Mammary epithelial cell (primary cell): ENCODE measurements at regions of chr14 and their contacts with region 1.

Region 1: GRCh38 chr14:51395361-51395849 is 155.4 kb downstream of the TMX1 start:
- DNase-seq: peak; percentile 95
- H3K4me3 ChIP-seq: peak overlapping the region in 1 of 3 experiments; percentile 12
- H3K27ac ChIP-seq: peak overlapping the region; percentile 99
- H3K4me1 ChIP-seq: peaks cover 60% of the 10 kb centered on the region
- H3K27me3 ChIP-seq: no peaks in the 10 kb centered on the region
- CTCF ChIP-seq: peak in 1 of 2 donors; percentile 21

Region 2: GRCh38 chr14:51298895-51299294 is 96.5 kb before region 1 on chr14:
- CTCF ChIA-PET with region 1: no interaction called
- dilution Hi-C with region 1: no loop called
- in situ Hi-C with region 1: no loop called
- intact Hi-C with region 1: loop called (anchors 5 kb)
- DNase-seq: no peak
- H3K4me3 ChIP-seq: no peak overlapping the region
- H3K27ac ChIP-seq: no peak overlapping the region
- H3K4me1 ChIP-seq: peaks cover 20% of the 10 kb centered on the region
- H3K27me3 ChIP-seq: no peaks in the 10 kb centered on the region
- CTCF ChIP-seq: no peak

Region 3: DNA sequence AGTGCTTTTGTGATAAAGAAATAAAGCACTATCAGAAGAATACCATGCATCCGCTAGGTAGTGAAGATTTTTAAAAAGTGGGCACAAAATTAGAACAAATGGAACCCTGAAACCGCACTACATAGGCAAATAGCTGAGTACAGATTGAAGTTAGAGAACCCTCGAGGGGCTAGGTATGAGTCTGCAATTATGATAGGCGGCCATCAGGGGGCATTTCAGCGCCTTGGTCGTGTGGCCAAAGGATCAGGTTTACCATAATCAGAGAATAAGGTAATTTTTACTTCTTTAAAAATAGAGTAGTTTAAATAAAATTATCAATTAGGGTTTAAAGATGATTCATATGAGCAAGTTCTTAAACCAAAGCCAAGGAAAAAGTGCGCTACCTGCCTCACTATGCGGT is 25.6 kb before region 1 on chr14:
- CTCF ChIA-PET with region 1: no interaction called
- dilution Hi-C with region 1: no loop called
- in situ Hi-C with region 1: no loop called
- intact Hi-C with region 1: loop called (anchors 1 kb)
- DNase-seq: no peak
- H3K4me3 ChIP-seq: no peak overlapping the region
- H3K27ac ChIP-seq: no peak overlapping the region
- H3K4me1 ChIP-seq: peaks cover 41% of the 10 kb centered on the region
- H3K27me3 ChIP-seq: no peaks in the 10 kb centered on the region
- CTCF ChIP-seq: peak; percentile 24 to 47

Region 4: GRCh38 chr14:51472881-51473280 is 77.5 kb after region 1 on chr14:
- CTCF ChIA-PET with region 1: interaction called, 12 read pairs
- dilution Hi-C with region 1: no loop called
- in situ Hi-C with region 1: no loop called
- intact Hi-C with region 1: no loop called
- DNase-seq: no peak
- H3K4me3 ChIP-seq: no peak overlapping the region
- H3K27ac ChIP-seq: peak overlapping the region; percentile 52
- H3K4me1 ChIP-seq: peaks cover 30% of the 10 kb centered on the region
- H3K27me3 ChIP-seq: no peaks in the 10 kb centered on the region
- CTCF ChIP-seq: no peak

Region 5: DNA sequence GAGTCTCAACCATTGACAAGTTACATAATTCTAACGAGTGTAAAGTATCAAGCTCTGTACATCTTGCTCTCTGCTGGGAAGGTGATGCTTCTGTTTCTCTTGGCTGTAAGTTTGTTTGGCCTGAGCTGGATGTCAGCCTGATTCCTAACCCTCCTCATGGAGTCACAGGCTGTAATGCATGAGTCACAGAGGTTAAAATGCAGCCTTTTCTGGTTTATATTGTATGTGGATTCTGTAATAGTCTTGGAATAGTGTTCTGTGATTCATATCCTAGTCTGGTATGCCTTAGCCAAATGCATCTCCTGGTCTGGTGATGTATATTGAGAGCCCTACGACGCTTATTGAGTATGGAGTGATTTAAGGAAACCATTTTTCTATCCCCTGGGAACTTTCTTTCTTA is 151.9 kb after region 1 on chr14:
- CTCF ChIA-PET with region 1: no interaction called
- dilution Hi-C with region 1: no loop called
- in situ Hi-C with region 1: no loop called
- intact Hi-C with region 1: loop called (anchors 1 kb)
- DNase-seq: peak; percentile 99
- H3K4me3 ChIP-seq: peak overlapping the region in 1 of 3 experiments; percentile 8
- H3K27ac ChIP-seq: peak overlapping the region; percentile 96
- H3K4me1 ChIP-seq: peaks cover 60% of the 10 kb centered on the region
- H3K27me3 ChIP-seq: no peaks in the 10 kb centered on the region
- CTCF ChIP-seq: no peak

Region 6: GRCh38 chr14:51780006-51780692 is 384.7 kb after region 1 on chr14:
- CTCF ChIA-PET with region 1: no interaction called
- dilution Hi-C with region 1: no loop called
- in situ Hi-C with region 1: no loop called
- intact Hi-C with region 1: loop called (anchors 2 kb)
- DNase-seq: peak; percentile 35
- H3K4me3 ChIP-seq: no peak overlapping the region
- H3K27ac ChIP-seq: no peak overlapping the region
- H3K4me1 ChIP-seq: peaks cover 7% of the 10 kb centered on the region
- H3K27me3 ChIP-seq: no peaks in the 10 kb centered on the region
- CTCF ChIP-seq: peak; percentile 67 to 76